GM12878 (cell line): ENCODE measurements at regions of chr9 and their contacts with region 1.

Region 1: GRCh38 chr9:17171309-17172094 is 36.7 kb downstream of the CNTLN start:
- DNase-seq: no peak
- ATAC-seq: no peak
- H3K4me3 ChIP-seq: no peak overlapping the region
- H3K27ac ChIP-seq: no peak overlapping the region
- H3K4me1 ChIP-seq: no peaks in the 10 kb centered on the region
- H3K27me3 ChIP-seq: no peaks in the 10 kb centered on the region
- CTCF ChIP-seq: no peak
- EP300 ChIP-seq: no peak
- POLR2A ChIP-seq: no peak
- RAD21 ChIP-seq: no peak

Region 2: DNA sequence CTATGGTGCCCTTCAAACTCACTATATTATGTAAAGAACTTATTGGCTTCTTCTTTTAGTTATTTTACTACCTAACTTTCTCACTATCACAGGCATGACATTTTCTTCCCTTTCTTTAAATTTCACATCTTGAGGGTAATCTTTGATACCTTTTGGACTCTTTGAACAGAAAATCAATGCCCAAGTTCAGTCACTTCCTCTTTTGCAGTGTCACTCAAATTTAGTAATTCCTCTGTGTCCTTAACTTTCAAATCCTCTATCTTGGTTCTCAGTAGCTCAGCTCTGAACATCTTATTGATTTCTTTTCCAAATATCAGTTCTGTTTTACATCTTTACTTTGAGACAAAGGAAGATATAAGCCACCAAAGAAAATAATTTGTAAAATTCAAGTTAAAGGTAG is 11.2 kb before region 1 on chr9:
- CTCF ChIA-PET with region 1: no interaction called
- POLR2A ChIA-PET with region 1: no interaction called
- RAD21 ChIA-PET with region 1: no interaction called
- SMC1A ChIA-PET with region 1: no interaction called
- in situ Hi-C with region 1: no loop called
- intact Hi-C with region 1: no loop called
- DNase-seq: no peak
- ATAC-seq: no peak
- H3K4me3 ChIP-seq: no peak overlapping the region
- H3K27ac ChIP-seq: no peak overlapping the region
- H3K4me1 ChIP-seq: no peaks in the 10 kb centered on the region
- H3K27me3 ChIP-seq: no peaks in the 10 kb centered on the region
- CTCF ChIP-seq: no peak
- EP300 ChIP-seq: no peak
- POLR2A ChIP-seq: no peak
- RAD21 ChIP-seq: no peak

Region 3: DNA sequence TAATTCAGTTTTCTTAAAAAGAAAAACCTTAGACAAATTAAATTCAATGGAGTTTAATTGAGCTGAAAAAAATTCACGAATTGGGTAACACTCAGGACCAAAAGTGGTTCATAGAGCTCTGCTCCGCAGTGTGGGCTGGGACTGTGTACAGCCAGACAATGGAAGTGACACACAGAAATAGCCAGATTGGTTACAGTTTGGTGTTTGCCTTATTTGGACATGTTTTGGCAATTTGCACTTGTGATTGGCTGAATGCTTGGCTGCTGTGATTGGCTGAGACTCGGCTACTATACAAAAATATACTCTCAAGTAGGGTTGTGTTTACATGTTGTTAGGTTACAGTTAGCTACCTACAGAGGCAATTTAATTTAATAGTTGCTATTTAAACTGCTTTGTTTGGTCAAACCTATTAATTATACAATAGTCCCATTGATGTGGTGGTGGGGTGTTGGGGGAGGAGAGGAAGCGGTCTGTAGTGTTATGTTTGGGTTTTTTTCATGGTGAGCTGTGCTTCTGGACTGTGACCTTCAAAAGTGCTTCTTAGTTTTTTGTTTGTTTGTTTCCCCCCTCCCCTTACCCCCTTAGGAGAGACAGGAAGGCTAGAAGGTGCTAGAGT is 58.6 kb after region 1 on chr9:
- CTCF ChIA-PET with region 1: no interaction called
- POLR2A ChIA-PET with region 1: no interaction called
- RAD21 ChIA-PET with region 1: no interaction called
- SMC1A ChIA-PET with region 1: no interaction called
- in situ Hi-C with region 1: no loop called
- intact Hi-C with region 1: loop called (anchors 5 kb)
- DNase-seq: no peak
- ATAC-seq: peak; percentile 40
- H3K4me3 ChIP-seq: no peak overlapping the region
- H3K27ac ChIP-seq: no peak overlapping the region
- H3K4me1 ChIP-seq: no peaks in the 10 kb centered on the region
- H3K27me3 ChIP-seq: no peaks in the 10 kb centered on the region
- CTCF ChIP-seq: no peak
- EP300 ChIP-seq: no peak
- POLR2A ChIP-seq: no peak
- RAD21 ChIP-seq: no peak

Region 4: GRCh38 chr9:17246770-17247169 is 75.3 kb after region 1 on chr9:
- CTCF ChIA-PET with region 1: no interaction called
- POLR2A ChIA-PET with region 1: no interaction called
- RAD21 ChIA-PET with region 1: no interaction called
- SMC1A ChIA-PET with region 1: no interaction called
- in situ Hi-C with region 1: no loop called
- intact Hi-C with region 1: no loop called
- DNase-seq: no peak
- ATAC-seq: no peak
- H3K4me3 ChIP-seq: no peak overlapping the region
- H3K27ac ChIP-seq: no peak overlapping the region
- H3K4me1 ChIP-seq: no peaks in the 10 kb centered on the region
- H3K27me3 ChIP-seq: no peaks in the 10 kb centered on the region
- CTCF ChIP-seq: no peak
- EP300 ChIP-seq: no peak
- POLR2A ChIP-seq: no peak
- RAD21 ChIP-seq: no peak

Region 5: GRCh38 chr9:17342696-17343095 is 171.2 kb after region 1 on chr9:
- CTCF ChIA-PET with region 1: no interaction called
- POLR2A ChIA-PET with region 1: no interaction called
- RAD21 ChIA-PET with region 1: no interaction called
- SMC1A ChIA-PET with region 1: no interaction called
- in situ Hi-C with region 1: no loop called
- intact Hi-C with region 1: no loop called
- DNase-seq: no peak
- ATAC-seq: no peak
- H3K4me3 ChIP-seq: no peak overlapping the region
- H3K27ac ChIP-seq: no peak overlapping the region
- H3K4me1 ChIP-seq: no peaks in the 10 kb centered on the region
- H3K27me3 ChIP-seq: no peaks in the 10 kb centered on the region
- CTCF ChIP-seq: no peak
- EP300 ChIP-seq: no peak
- POLR2A ChIP-seq: no peak
- RAD21 ChIP-seq: no peak